ENCODE measurements at regions of chr5 and their contacts with region 1.

Region 1: GRCh38 chr5:128201065-128201926 is 117.7 kb downstream of the SLC12A2 start:
- DNase-seq: peak; percentile 81 to 89
- ATAC-seq: peak; percentile 75 to 87 (median 80)
- H3K4me3 ChIP-seq: peak overlapping the region; percentile 43
- H3K27ac ChIP-seq: peak overlapping the region; percentile 88
- H3K4me1 ChIP-seq: peaks cover 42% of the 10 kb centered on the region
- H3K27me3 ChIP-seq: no peaks in the 10 kb centered on the region
- CTCF ChIP-seq: peak; percentile 92

Region 2: DNA sequence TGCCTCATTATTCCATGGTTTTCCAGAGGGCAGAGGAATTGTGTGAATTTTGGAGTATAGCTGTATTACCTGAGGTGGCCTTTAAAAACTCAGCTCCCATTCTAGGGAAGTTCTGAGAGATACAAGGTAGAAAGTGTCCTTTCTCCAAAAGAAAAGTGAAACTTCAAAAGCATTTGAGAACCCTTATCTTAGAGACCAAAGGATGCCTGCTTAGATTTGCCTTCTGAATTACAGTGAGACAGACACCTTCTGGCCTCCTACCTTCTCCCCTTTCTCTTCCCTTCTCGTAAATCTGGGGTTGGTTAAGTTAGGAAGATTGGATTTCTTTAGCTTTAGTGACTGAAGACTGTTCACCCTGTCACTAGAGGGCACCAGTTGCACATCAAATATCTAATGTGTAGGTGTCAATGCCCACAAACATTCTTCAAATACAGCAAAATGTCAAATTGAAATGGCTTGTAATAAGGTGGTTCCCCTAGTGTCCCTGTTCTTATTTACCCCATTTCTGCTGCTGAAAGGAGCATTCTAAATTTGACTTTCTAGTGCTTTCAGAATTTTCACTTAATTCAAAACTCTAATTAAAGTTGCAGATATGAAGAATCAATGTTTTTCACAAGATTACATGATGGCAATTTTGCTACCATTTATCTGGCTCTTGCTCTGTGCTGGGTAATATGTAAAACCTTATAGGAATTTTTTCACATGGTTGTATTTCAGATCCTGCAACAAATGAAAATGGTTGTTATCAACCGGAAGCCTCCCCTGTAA is 637.1 kb before region 1 on chr5:
- intact Hi-C with region 1: loop called (anchors 1 to 2 kb)
- DNase-seq: no peak
- ATAC-seq: peak; percentile 64 to 86 (median 74)
- H3K4me3 ChIP-seq: no peak overlapping the region
- H3K27ac ChIP-seq: peak overlapping the region; percentile 7
- H3K4me1 ChIP-seq: peaks cover 31% of the 10 kb centered on the region
- H3K27me3 ChIP-seq: no peaks in the 10 kb centered on the region
- CTCF ChIP-seq: peak; percentile 74

Region 3: GRCh38 chr5:127697894-127698600 is 503.2 kb before region 1 on chr5:
- intact Hi-C with region 1: loop called in 1 of 2 experiments (anchors 2 kb)
- DNase-seq: no peak
- ATAC-seq: no peak
- H3K4me3 ChIP-seq: peak overlapping the region; percentile 41
- H3K27ac ChIP-seq: peak overlapping the region; percentile 86
- H3K4me1 ChIP-seq: peaks cover 24% of the 10 kb centered on the region
- H3K27me3 ChIP-seq: no peaks in the 10 kb centered on the region
- CTCF ChIP-seq: no peak

Region 4: GRCh38 chr5:127757576-127757975 is 443.7 kb before region 1 on chr5:
- intact Hi-C with region 1: loop called in 1 of 2 experiments (anchors 10 kb)
- DNase-seq: no peak
- ATAC-seq: peak; percentile 65 to 95 (median 87)
- H3K4me3 ChIP-seq: no peak overlapping the region
- H3K27ac ChIP-seq: no peak overlapping the region
- H3K4me1 ChIP-seq: peaks cover 11% of the 10 kb centered on the region
- H3K27me3 ChIP-seq: no peaks in the 10 kb centered on the region
- CTCF ChIP-seq: peak; percentile 56

Region 5: GRCh38 chr5:128083033-128083810 is 118.1 kb before region 1 on chr5 and contains the start of gene SLC12A2:
- intact Hi-C with region 1: loop called in 1 of 2 experiments (anchors 5 kb)
- DNase-seq: peak; percentile 92 to 96
- ATAC-seq: peak; percentile 87 to 90 (median 88)
- H3K4me3 ChIP-seq: peak within 1 kb of the TSS; percentile 89
- H3K27ac ChIP-seq: peak within 1 kb of the TSS; percentile 96
- H3K4me1 ChIP-seq: peaks cover 31% of the 10 kb centered on the region
- H3K27me3 ChIP-seq: no peaks in the 10 kb centered on the region
- CTCF ChIP-seq: no peak
- total RNA-seq, gene SLC12A2: 11.7 to 25.8 (median 16.3) TPM

Region 6: DNA sequence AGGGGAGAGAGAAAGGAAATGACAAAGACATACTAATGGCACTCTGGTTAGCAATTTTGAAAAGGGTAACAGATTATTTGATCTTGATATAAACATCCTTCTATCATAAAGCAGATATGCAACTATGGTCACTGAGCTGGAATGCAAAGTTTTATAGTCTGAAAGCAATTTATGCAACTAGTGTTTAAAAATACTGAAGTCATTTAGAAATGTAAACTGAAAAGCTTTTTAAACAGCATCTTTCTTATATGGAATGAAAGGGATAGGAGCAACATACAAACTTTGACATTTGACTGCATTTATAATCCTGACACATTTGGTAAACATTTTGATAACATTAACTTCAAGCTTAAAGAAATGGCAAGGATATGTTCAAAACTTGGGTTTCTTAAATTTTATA is 1230.1 kb after region 1 on chr5:
- intact Hi-C with region 1: no loop called
- DNase-seq: no peak
- ATAC-seq: no peak
- H3K4me3 ChIP-seq: no peak overlapping the region
- H3K27ac ChIP-seq: no peak overlapping the region
- H3K4me1 ChIP-seq: no peaks in the 10 kb centered on the region
- H3K27me3 ChIP-seq: no peaks in the 10 kb centered on the region
- CTCF ChIP-seq: no peak

Measured in psoas muscle (tissue), 8 donors.